AG04449 (cell line): ENCODE measurements at regions of chr9 and their contacts with region 1.

Region 1: DNA sequence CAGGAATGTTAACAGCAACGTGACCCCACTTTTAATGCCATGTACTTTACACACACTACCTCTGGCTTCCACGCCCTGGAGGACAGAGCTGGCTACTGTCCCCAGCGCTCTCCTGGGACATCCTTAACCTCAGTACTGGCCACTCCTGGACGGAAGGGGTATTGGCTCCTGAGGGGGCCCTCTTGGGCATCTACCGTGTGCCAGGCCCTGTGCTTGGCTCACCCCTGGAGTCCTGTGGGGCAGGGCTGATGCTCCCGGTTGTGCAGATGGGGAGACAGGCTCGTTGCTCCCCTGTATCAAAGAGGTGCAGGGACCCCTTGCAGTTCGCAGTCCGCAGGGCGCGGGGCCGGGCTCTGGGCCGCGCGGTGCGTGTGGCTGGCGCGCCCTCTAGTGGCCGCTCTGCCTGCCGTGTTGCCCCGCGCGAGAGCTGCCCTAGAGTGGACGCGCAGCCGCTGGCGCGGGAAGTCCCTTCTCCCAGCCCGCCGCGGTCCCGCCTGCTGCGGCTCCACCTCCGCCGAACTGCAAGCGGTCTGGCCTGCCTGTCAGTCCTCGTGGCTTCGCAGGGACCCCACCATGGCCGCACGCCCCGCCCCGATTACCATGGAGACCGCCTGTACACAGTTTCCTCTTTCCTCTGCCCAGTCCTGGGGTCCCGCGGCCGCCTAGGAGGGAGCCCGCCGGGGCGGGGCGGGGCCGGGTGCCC is at the start of gene WDR38:
- DNase-seq: no peak
- H3K4me3 ChIP-seq: peak within 1 kb of the TSS; percentile 60
- CTCF ChIP-seq: peak; percentile 89

Region 2: DNA sequence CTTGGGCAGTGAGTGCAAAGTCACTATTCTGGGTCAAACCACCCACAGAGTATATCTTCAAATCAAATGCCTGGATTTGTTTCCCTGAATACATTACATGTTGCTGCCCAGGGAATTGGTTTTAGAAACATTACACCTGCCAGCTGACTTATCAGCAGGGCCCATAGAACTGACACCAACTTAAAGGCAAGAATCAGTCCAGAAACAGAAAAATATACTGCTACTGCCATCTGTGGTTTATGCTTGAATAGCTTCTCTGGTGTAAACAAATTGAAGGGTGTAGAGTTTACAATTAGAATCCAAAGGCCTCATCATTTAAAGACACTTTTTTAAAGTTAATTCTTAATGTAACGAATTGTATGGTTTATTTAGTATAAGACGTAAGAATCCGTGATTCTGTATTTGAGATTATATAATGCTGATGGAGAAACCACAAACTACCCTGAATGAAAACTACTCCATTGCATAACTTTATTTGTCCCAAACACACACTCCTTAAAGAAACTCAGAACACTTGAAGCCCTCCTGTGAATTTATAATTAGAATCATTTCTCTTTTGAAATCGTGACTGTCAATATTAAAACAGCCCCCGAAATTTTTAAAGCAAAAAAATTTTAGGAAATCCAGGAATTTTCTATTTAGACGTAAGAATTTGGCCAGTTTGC is 88.1 kb before region 1 on chr9:
- CTCF ChIA-PET with region 1: interaction called, 2,098 read pairs
- POLR2A ChIA-PET with region 1: no interaction called
- DNase-seq: no peak
- H3K4me3 ChIP-seq: no peak overlapping the region
- CTCF ChIP-seq: peak; percentile 20

Region 3: GRCh38 chr9:124782661-124783574 is 70.1 kb before region 1 on chr9:
- CTCF ChIA-PET with region 1: interaction called, 2,098 read pairs
- POLR2A ChIA-PET with region 1: interaction called, 12 read pairs
- DNase-seq: no peak
- H3K4me3 ChIP-seq: no peak overlapping the region
- CTCF ChIP-seq: no peak

Region 4: GRCh38 chr9:124800306-124801259 is 52.4 kb before region 1 on chr9:
- CTCF ChIA-PET with region 1: interaction called, 21 read pairs
- POLR2A ChIA-PET with region 1: no interaction called
- DNase-seq: no peak
- H3K4me3 ChIP-seq: no peak overlapping the region
- CTCF ChIP-seq: no peak

Region 5: GRCh38 chr9:124839612-124840299 is 13.2 kb before region 1 on chr9:
- CTCF ChIA-PET with region 1: interaction called, 276 read pairs
- POLR2A ChIA-PET with region 1: no interaction called
- DNase-seq: no peak
- H3K4me3 ChIP-seq: no peak overlapping the region
- CTCF ChIP-seq: peak; percentile 55

Region 6: DNA sequence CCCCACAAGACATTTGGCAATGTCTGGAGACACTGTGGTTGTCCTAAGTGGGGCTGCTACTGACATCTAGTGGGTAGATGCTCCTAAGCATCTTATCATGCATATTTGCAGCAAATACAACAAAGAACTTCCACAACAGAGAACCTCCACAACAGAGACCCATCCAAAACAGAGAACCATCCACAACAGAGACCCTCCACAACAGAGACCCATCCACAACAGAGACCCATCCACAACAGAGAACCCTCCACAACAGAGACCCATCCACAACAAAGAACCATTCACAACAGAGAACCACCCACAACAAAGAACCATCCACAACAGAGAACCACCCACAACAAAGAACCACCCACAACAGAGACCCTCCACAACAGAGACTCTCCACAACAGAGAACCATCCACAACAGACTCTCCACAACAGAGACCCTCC is 41.8 kb after region 1 on chr9:
- CTCF ChIA-PET with region 1: interaction called, 17 read pairs
- POLR2A ChIA-PET with region 1: no interaction called
- DNase-seq: no peak
- H3K4me3 ChIP-seq: no peak overlapping the region
- CTCF ChIP-seq: peak; percentile 52